Naive thymus-derived CD4-positive, alpha-beta T cell (primary cell): ENCODE measurements at regions of chr2 and their contacts with region 1.

Region 1: GRCh38 chr2:174748948-174749347 is 15.3 kb downstream of the CHRNA1 start:
- DNase-seq: peak; percentile 42 to 80 (median 67)
- ATAC-seq: peak; percentile 83
- H3K4me3 ChIP-seq: no peak overlapping the region
- H3K4me3 Mint-ChIP-seq: no peak overlapping the region
- H3K27ac ChIP-seq: no peak overlapping the region
- H3K27ac Mint-ChIP-seq: peak overlapping the region in 4 of 9 donors; percentile 25 to 64 (median 44)
- H3K4me1 ChIP-seq: peaks cover 8 to 47% of the 10 kb centered on the region in 2 donors
- H3K4me1 Mint-ChIP-seq: peaks cover 7 to 31% (median 16%) of the 10 kb centered on the region in 7 donors
- H3K27me3 ChIP-seq: no peaks in the 10 kb centered on the region
- H3K27me3 Mint-ChIP-seq: peaks cover 0 to 28% (median 0%) of the 10 kb centered on the region in 5 donors

Region 2: GRCh38 chr2:174697255-174697654 is 51.7 kb before region 1 on chr2:
- CTCF ChIA-PET with region 1: interaction called, 49 read pairs
- POLR2A ChIA-PET with region 1: no interaction called
- intact Hi-C with region 1: loop called (anchors 1 kb)
- DNase-seq: peak in 8 of 9 donors; percentile 38 to 60 (median 49)
- ATAC-seq: peak; percentile 93
- H3K4me3 ChIP-seq: no peak overlapping the region
- H3K4me3 Mint-ChIP-seq: no peak overlapping the region
- H3K27ac ChIP-seq: no peak overlapping the region
- H3K27ac Mint-ChIP-seq: peak overlapping the region in 1 of 9 donors; percentile 55
- H3K4me1 ChIP-seq: no peaks in the 10 kb centered on the region
- H3K4me1 Mint-ChIP-seq: peaks cover 0 to 7% (median 0%) of the 10 kb centered on the region in 7 donors
- H3K27me3 ChIP-seq: no peaks in the 10 kb centered on the region
- H3K27me3 Mint-ChIP-seq: peaks cover 0 to 40% (median 0%) of the 10 kb centered on the region in 5 donors

Region 3: GRCh38 chr2:174771631-174772471 is 22.9 kb after region 1 on chr2:
- CTCF ChIA-PET with region 1: interaction called, 12 read pairs
- POLR2A ChIA-PET with region 1: no interaction called
- intact Hi-C with region 1: no loop called
- DNase-seq: peak in 2 of 9 donors; percentile 25 to 42
- ATAC-seq: peak; percentile 72
- H3K4me3 ChIP-seq: no peak overlapping the region
- H3K4me3 Mint-ChIP-seq: peak overlapping the region in 1 of 10 donors; percentile 24
- H3K27ac ChIP-seq: no peak overlapping the region
- H3K27ac Mint-ChIP-seq: peak overlapping the region in 3 of 9 donors; percentile 21 to 91 (median 70)
- H3K4me1 ChIP-seq: peaks cover 0 to 8% of the 10 kb centered on the region in 2 donors
- H3K4me1 Mint-ChIP-seq: peaks cover 7 to 22% (median 14%) of the 10 kb centered on the region in 7 donors
- H3K27me3 ChIP-seq: no peaks in the 10 kb centered on the region
- H3K27me3 Mint-ChIP-seq: peaks cover 0 to 6% (median 0%) of the 10 kb centered on the region in 5 donors

Region 4: DNA sequence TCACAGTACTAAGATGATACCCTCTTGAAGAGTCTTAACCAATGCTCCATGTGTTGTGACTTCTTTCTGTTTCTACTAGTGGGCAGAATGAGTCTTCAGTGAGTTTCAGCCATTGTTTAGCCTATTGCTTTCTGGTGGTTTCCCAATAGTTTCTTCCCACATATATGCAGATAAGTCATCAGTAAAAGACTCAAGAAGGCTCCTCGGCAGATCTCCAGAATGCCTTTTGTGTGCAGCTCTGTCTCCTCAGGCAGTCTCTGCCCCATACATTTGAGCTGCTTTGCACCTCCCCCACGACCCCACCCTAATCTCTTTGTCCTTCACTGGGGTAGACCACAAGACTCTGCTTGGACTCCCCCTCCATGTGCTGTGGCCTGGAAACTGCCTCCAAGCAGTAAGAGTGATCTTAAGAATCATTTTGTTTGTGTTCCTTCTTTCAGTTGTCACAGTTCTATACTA is 86.9 kb after region 1 on chr2:
- CTCF ChIA-PET with region 1: no interaction called
- POLR2A ChIA-PET with region 1: no interaction called
- intact Hi-C with region 1: no loop called
- DNase-seq: peak in 1 of 9 donors; percentile 63
- ATAC-seq: no peak
- H3K4me3 ChIP-seq: no peak overlapping the region
- H3K4me3 Mint-ChIP-seq: no peak overlapping the region
- H3K27ac ChIP-seq: no peak overlapping the region
- H3K27ac Mint-ChIP-seq: no peak overlapping the region
- H3K4me1 ChIP-seq: no peaks in the 10 kb centered on the region
- H3K4me1 Mint-ChIP-seq: peaks cover 5 to 24% (median 10%) of the 10 kb centered on the region in 7 donors
- H3K27me3 ChIP-seq: no peaks in the 10 kb centered on the region
- H3K27me3 Mint-ChIP-seq: peaks cover 0 to 11% (median 4%) of the 10 kb centered on the region in 5 donors

Region 5: GRCh38 chr2:174846941-174847938 is 98.3 kb after region 1 on chr2:
- CTCF ChIA-PET with region 1: no interaction called
- POLR2A ChIA-PET with region 1: no interaction called
- intact Hi-C with region 1: loop called in 1 of 2 experiments (anchors 5 kb)
- DNase-seq: peak in 1 of 9 donors; percentile 3
- ATAC-seq: peak; percentile 46
- H3K4me3 ChIP-seq: no peak overlapping the region
- H3K4me3 Mint-ChIP-seq: peak overlapping the region in 8 of 10 donors; percentile 25 to 76 (median 57)
- H3K27ac ChIP-seq: no peak overlapping the region
- H3K27ac Mint-ChIP-seq: peak overlapping the region in 1 of 9 donors; percentile 32
- H3K4me1 ChIP-seq: no peaks in the 10 kb centered on the region
- H3K4me1 Mint-ChIP-seq: peaks cover 0 to 18% (median 3%) of the 10 kb centered on the region in 7 donors
- H3K27me3 ChIP-seq: no peaks in the 10 kb centered on the region
- H3K27me3 Mint-ChIP-seq: no peaks in the 10 kb centered on the region

Region 6: GRCh38 chr2:174892546-174892945 is 143.6 kb after region 1 on chr2:
- CTCF ChIA-PET with region 1: no interaction called
- POLR2A ChIA-PET with region 1: no interaction called
- intact Hi-C with region 1: no loop called
- DNase-seq: no peak
- ATAC-seq: no peak
- H3K4me3 ChIP-seq: no peak overlapping the region
- H3K4me3 Mint-ChIP-seq: no peak overlapping the region
- H3K27ac ChIP-seq: no peak overlapping the region
- H3K27ac Mint-ChIP-seq: no peak overlapping the region
- H3K4me1 ChIP-seq: no peaks in the 10 kb centered on the region
- H3K4me1 Mint-ChIP-seq: no peaks in the 10 kb centered on the region
- H3K27me3 ChIP-seq: no peaks in the 10 kb centered on the region
- H3K27me3 Mint-ChIP-seq: peaks cover 0 to 3% (median 0%) of the 10 kb centered on the region in 5 donors

Region 7: DNA sequence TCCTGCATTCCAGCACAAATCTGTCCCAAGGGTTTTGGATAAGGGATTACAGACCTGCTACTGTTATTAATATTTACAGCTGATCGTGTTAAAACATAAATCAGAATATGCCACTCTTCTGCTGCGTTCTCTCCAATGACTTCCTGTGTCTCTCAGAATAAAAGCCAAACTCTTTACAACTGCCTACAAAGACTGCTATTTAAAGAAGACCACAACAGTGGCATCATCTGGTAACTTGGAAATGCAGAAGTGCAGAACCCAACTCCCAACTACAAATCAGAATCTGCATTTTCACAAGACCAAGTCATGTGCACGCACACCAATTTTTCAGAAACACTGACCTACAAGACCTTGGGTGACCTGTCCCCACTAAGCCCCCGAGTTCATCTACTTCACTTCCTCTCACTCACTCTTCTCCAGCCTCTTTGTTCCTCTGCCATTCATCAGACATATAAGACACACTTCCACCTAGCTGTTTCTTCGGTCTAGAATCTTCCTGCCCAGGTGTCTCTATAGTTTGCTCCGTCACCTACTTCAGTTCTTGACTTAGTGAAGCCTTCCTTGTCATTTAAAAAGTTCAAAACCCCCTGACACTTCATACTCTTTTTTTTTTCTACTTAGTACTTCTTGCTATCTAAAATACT is 220.3 kb after region 1 on chr2:
- CTCF ChIA-PET with region 1: interaction called, 3 read pairs
- POLR2A ChIA-PET with region 1: no interaction called
- intact Hi-C with region 1: loop called in 1 of 2 experiments (anchors 1 kb)
- DNase-seq: peak in 6 of 9 donors; percentile 11 to 43 (median 30)
- ATAC-seq: peak; percentile 29
- H3K4me3 ChIP-seq: no peak overlapping the region
- H3K4me3 Mint-ChIP-seq: peak overlapping the region in 8 of 10 donors; percentile 3 to 78 (median 45)
- H3K27ac ChIP-seq: no peak overlapping the region
- H3K27ac Mint-ChIP-seq: peak overlapping the region in 3 of 9 donors; percentile 0 to 19 (median 8)
- H3K4me1 ChIP-seq: peaks cover 0 to 5% of the 10 kb centered on the region in 2 donors
- H3K4me1 Mint-ChIP-seq: peaks cover 6 to 23% (median 13%) of the 10 kb centered on the region in 7 donors
- H3K27me3 ChIP-seq: no peaks in the 10 kb centered on the region
- H3K27me3 Mint-ChIP-seq: peaks cover 0 to 18% (median 4%) of the 10 kb centered on the region in 5 donors

Region 8: DNA sequence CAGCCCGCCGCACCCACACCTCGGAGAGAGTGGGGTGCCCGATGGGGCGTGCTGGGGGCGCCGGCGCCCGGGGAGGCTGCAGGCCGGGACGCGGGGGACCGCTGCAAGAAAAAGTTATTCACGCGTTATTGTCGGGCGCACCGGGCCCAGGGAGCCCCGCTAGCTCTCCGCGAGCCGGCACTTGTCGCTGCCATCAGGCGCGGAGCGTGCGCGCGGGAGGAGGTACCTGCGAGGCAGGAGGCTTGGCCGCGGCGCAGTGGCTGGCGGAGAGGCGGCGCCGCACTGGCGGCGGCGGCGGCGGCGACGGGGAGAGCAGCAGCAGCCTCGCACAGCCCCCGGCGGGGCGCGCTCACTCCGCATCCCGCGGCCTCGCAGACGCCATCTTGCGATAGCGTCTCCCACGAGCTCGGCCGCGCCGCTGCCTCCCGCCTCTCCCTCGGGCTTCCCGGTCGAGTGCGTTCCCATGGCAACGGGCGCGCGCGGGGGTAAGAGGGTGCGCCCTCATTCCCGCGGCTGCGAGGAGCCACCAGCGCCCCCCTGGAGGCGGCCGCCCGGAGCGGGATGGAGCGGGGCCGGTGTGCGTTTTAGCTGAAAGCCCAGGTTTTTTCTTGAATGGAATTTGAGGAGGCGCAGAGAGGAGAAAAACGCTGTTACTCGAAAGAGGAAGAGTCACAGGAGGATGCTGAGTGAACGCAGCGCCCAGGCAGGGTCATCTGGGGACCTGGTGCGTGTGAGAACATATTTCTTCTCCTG is 256.2 kb after region 1 on chr2 and contains the start of gene CHN1:
- CTCF ChIA-PET with region 1: interaction called, 4 read pairs
- POLR2A ChIA-PET with region 1: no interaction called
- intact Hi-C with region 1: loop called in 1 of 2 experiments (anchors 5 kb)
- DNase-seq: peak; percentile 48 to 73 (median 63)
- ATAC-seq: peak; percentile 97
- H3K4me3 ChIP-seq: peak within 1 kb of the TSS; percentile 55
- H3K4me3 Mint-ChIP-seq: peak within 1 kb of the TSS; percentile 82 to 88 (median 84)
- H3K27ac ChIP-seq: no peak within 1 kb of the TSS
- H3K27ac Mint-ChIP-seq: peak within 1 kb of the TSS in 5 of 9 donors; percentile 12 to 41 (median 34)
- H3K4me1 ChIP-seq: peaks cover 0 to 6% of the 10 kb centered on the region in 2 donors
- H3K4me1 Mint-ChIP-seq: peaks cover 0 to 12% (median 5%) of the 10 kb centered on the region in 7 donors
- H3K27me3 ChIP-seq: peaks cover 9 to 14% of the 10 kb centered on the region in 2 donors
- H3K27me3 Mint-ChIP-seq: peaks cover 52 to 77% (median 59%) of the 10 kb centered on the region in 5 donors
- total RNA-seq, gene CHN1: 0.81 to 3.5 (median 2.3) TPM